ENCODE measurements at regions of chr5 and their contacts with region 1.

Region 1: GRCh38 chr5:80487829-80488721 is at the start of gene FAM151B:
- DNase-seq: peak; percentile 95
- H3K4me3 Mint-ChIP-seq: peak within 1 kb of the TSS; percentile 95
- H3K27ac Mint-ChIP-seq: peak within 1 kb of the TSS; percentile 94
- H3K4me1 Mint-ChIP-seq: peaks cover 17% of the 10 kb centered on the region
- H3K27me3 Mint-ChIP-seq: no peaks in the 10 kb centered on the region
- CTCF ChIP-seq: peak; percentile 34
- total RNA-seq, gene FAM151B: 1.8 TPM in 2 replicates

Region 2: DNA sequence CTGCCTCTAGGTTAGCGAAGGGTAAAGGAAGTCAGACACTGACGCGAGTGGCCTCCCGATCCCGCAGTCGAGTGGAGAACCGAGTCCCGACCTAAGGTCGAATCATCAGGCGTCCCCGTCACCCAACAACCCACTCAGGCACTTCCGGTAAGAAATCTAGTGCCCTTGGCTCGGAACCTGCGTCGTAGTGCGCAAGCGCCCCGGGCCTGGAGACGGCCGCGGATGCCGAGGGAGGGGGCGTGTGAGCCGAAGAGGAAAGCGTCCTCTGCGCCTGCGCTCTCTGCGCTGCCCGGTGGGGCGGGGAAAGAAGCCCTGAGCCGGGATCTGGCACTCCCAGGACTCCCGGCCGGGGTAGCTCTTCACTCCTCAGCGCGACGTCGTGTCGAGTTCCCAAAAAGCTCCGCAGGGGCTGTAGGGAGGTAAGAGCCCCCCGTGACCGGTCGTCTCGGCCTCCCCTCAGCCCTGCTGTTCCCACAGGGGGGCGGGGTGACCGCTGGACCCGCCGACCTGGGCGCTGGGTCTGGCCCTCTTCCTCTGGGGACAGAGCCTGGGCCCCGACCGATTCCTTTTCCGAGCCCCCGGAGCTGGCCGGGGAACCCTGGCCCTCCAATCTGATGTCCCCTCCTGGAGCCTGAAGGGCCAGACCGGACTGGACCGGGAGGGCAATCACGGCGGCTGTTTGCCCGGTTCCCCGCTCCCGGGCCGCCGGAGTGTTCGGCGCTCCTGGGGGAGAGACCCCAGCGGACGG is 80.2 kb before region 1 on chr5 and contains the start of gene ZFYVE16:
- CTCF ChIA-PET with region 1: no interaction called
- POLR2A ChIA-PET with region 1: interaction called, 16 read pairs
- intact Hi-C with region 1: no loop called
- DNase-seq: peak; percentile 97
- H3K4me3 Mint-ChIP-seq: peak within 1 kb of the TSS; percentile 80
- H3K27ac Mint-ChIP-seq: peak within 1 kb of the TSS; percentile 98
- H3K4me1 Mint-ChIP-seq: peaks cover 19% of the 10 kb centered on the region
- H3K27me3 Mint-ChIP-seq: no peaks in the 10 kb centered on the region
- CTCF ChIP-seq: peak; percentile 38
- total RNA-seq, gene ZFYVE16: 34.8 and 36.9 TPM in 2 replicates

Region 3: DNA sequence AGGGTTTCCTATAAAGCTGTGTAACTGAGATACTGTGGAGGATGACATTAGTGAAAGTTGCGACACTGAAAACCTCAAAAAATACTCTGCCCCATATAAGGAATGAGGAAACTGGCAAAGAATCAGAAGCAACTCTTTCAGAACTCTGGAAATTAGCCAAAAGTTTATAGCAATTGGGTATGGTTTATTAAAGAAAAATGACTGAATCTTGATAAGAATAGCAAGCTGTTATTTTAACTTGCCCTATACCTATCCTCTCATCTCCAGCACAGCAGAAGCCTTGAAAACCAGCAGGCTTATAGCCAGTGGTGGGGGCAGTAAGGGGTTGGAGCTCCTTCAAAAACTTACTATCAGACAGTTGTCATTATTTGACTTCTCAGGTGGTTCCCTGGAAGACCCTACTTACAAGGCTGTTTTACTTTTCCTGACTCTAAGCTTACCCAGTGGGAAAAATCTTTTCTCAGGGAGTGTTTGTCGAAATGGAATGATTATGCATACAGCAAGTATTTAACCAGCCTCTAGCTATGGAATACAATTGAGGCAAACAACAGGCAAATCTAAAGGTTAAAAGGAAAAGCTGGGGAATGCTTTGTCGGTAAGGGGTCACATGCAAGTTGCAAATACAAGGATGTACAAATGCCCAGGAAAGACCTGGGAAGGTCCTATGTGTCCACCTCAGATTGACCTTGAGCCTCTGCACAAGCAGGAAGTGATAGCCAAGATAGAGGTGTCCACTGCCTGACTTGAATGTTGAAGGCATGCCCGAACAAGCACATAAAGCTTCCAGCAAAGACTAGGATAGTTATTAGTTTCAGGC is 21.2 kb before region 1 on chr5:
- CTCF ChIA-PET with region 1: no interaction called
- POLR2A ChIA-PET with region 1: interaction called, 52 read pairs
- intact Hi-C with region 1: no loop called
- DNase-seq: peak; percentile 56
- H3K4me3 Mint-ChIP-seq: peak overlapping the region; percentile 16
- H3K27ac Mint-ChIP-seq: peak overlapping the region; percentile 96
- H3K4me1 Mint-ChIP-seq: peaks cover 19% of the 10 kb centered on the region
- H3K27me3 Mint-ChIP-seq: no peaks in the 10 kb centered on the region
- CTCF ChIP-seq: no peak

Region 4: GRCh38 chr5:80654391-80655230 is 166.5 kb after region 1 on chr5 and contains the starts of genes DHFR and MSH3:
- CTCF ChIA-PET with region 1: no interaction called
- POLR2A ChIA-PET with region 1: interaction called, 11 read pairs
- intact Hi-C with region 1: loop called (anchors 2 kb)
- DNase-seq: peak; percentile 93
- H3K4me3 Mint-ChIP-seq: peak within 1 kb of the TSS; percentile 96
- H3K27ac Mint-ChIP-seq: peak within 1 kb of the TSS; percentile 81
- H3K4me1 Mint-ChIP-seq: peaks cover 23% of the 10 kb centered on the region
- H3K27me3 Mint-ChIP-seq: no peaks in the 10 kb centered on the region
- CTCF ChIP-seq: no peak
- total RNA-seq, gene DHFR: 6.3 and 13.0 TPM in 2 replicates
- total RNA-seq, gene MSH3: 17.5 and 21.9 TPM in 2 replicates

Region 5: DNA sequence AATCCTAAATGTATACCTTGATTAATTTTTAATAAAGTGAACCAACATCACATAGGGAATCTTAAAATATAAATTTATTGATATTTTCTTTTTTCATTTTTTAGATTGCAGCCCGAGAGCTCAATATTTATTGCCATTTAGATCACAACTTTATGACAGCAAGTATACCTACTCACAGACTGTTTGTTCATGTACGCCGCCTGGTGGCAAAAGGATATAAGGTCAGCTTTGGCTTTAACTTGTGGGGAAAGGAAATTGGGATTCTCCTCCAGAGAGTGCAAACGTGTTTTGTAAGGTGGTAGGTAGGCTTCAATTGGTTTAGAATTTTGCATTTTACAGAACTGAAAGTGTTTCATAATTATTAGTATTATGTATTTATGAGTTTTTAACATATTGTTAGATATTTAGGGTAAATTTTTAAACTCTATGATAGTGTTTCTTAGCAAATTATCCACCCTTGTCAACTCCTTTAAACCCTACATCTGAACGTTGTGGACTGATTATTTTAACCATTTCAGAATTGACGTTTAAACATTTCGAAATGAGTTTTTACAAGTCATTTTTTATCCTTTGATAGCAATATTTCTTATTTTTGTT is 184.2 kb after region 1 on chr5:
- CTCF ChIA-PET with region 1: interaction called, 35 read pairs
- POLR2A ChIA-PET with region 1: interaction called, 5 read pairs
- intact Hi-C with region 1: loop called (anchors 1 kb)
- DNase-seq: peak; percentile 88
- H3K4me3 Mint-ChIP-seq: no peak overlapping the region
- H3K27ac Mint-ChIP-seq: peak overlapping the region; percentile 73
- H3K4me1 Mint-ChIP-seq: no peaks in the 10 kb centered on the region
- H3K27me3 Mint-ChIP-seq: no peaks in the 10 kb centered on the region
- CTCF ChIP-seq: peak; percentile 54

Region 6: GRCh38 chr5:81165493-81166119 is 677.5 kb after region 1 on chr5:
- CTCF ChIA-PET with region 1: no interaction called
- POLR2A ChIA-PET with region 1: no interaction called
- intact Hi-C with region 1: loop called (anchors 5 kb)
- DNase-seq: peak; percentile 82
- H3K4me3 Mint-ChIP-seq: no peak overlapping the region
- H3K27ac Mint-ChIP-seq: no peak overlapping the region
- H3K4me1 Mint-ChIP-seq: no peaks in the 10 kb centered on the region
- H3K27me3 Mint-ChIP-seq: peaks cover 33% of the 10 kb centered on the region
- CTCF ChIP-seq: peak; percentile 72